Common myeloid progenitor, CD34-positive (primary cell): ENCODE measurements at regions of chr4 and their contacts with region 1.

Region 1: GRCh38 chr4:15805583-15806517 is 27.7 kb downstream of the CD38 start:
- DNase-seq: peak; percentile 64 to 83 (median 80)
- H3K4me3 ChIP-seq: no peak overlapping the region
- H3K27ac ChIP-seq: no peak overlapping the region
- H3K4me1 ChIP-seq: peaks cover 11 to 18% (median 15%) of the 10 kb centered on the region in 4 experiments
- H3K27me3 ChIP-seq: peaks cover 0 to 3% (median 0%) of the 10 kb centered on the region in 5 experiments

Region 2: DNA sequence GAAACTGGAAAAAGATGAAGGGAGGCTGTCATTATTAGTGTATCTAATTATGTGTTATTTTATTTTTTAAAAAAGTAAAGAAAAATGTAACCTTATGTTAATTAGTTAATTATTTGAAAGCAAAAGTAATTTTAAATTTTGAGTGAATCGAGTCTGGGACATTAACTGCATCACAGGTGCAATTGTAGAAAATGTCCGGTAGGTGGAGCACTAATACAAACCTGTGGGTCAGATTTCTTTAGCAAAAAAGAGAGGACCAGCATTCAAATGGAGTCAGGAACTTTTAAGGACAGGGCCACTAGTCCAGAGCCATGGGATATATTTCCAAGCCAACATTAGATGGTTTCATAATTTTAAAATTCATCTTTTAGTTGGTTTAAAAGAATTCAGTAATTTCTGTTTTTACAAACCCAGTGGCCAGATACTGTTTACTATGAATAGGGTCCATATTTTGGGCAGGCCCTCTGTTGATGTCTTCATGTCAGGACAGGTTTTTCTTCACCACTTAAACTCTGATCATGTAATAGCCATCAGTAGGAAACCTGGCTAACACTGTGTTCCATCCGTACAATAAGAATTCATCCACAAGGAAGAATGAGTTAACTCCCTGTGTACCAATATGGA is 75.8 kb before region 1 on chr4:
- CTCF ChIA-PET with region 1: interaction called, 59 read pairs
- POLR2A ChIA-PET with region 1: no interaction called
- DNase-seq: peak; percentile 48 to 60 (median 57)
- H3K4me3 ChIP-seq: no peak overlapping the region
- H3K27ac ChIP-seq: no peak overlapping the region
- H3K4me1 ChIP-seq: peaks cover 0 to 3% (median 0%) of the 10 kb centered on the region in 4 experiments
- H3K27me3 ChIP-seq: no peaks in the 10 kb centered on the region

Region 3: GRCh38 chr4:15778289-15779241 is 27.3 kb before region 1 on chr4 and contains the start of gene CD38:
- CTCF ChIA-PET with region 1: interaction called, 15 read pairs
- POLR2A ChIA-PET with region 1: no interaction called
- DNase-seq: peak; percentile 66 to 94 (median 90)
- H3K4me3 ChIP-seq: peak within 1 kb of the TSS; percentile 39 to 87 (median 79)
- H3K27ac ChIP-seq: peak within 1 kb of the TSS; percentile 28 to 69
- H3K4me1 ChIP-seq: peaks cover 15 to 53% (median 19%) of the 10 kb centered on the region in 4 experiments
- H3K27me3 ChIP-seq: peaks cover 0 to 33% (median 0%) of the 10 kb centered on the region in 5 experiments

Region 4: DNA sequence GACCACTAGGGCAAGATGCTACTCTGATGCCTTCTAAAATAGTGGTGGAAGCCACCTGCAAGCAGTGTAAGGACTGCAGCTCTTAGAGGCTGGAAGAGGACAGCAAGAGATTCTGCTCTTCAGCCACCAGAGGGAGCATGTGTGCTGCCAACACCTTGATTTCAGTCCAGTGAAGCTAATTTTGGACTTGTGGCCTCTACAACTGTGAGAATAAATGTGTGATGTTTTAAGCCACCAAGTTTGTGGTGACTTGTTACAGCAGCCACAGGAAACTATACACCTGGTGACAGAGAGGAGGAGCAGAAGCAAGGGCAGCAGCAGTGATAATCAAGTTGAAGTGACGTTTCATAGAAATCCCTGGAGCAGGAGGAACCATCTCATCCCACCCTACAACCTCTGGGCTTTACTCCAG is 76.8 kb after region 1 on chr4:
- CTCF ChIA-PET with region 1: interaction called, 88 read pairs
- POLR2A ChIA-PET with region 1: no interaction called
- DNase-seq: peak; percentile 74 to 87 (median 84)
- H3K4me3 ChIP-seq: no peak overlapping the region
- H3K27ac ChIP-seq: no peak overlapping the region
- H3K4me1 ChIP-seq: no peaks in the 10 kb centered on the region
- H3K27me3 ChIP-seq: peaks cover 0 to 2% (median 0%) of the 10 kb centered on the region in 5 experiments

Region 5: DNA sequence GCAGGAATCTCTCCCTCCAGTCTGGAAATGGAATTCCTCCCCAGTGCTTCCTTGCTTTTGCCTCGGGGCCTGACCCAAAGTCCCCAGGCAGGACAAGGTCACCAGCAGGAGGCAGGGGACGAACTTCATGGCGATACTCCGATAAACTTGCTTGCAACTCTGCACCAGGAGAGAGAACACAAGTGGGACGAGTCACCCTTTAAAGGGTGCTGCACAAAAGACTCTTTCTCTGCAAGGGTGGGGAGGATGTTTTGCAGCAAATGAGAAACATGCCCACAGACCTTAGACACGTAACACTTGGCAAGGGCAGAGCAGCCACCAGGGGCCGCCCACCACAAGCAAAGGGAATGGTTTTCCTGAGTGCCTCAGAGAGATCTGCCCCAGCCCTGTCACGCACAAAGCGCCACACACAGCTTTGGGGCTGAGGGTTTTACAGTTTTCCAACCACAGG is 157.2 kb after region 1 on chr4 and contains the start of gene FGFBP2:
- CTCF ChIA-PET with region 1: interaction called, 43 read pairs
- POLR2A ChIA-PET with region 1: no interaction called
- DNase-seq: peak; percentile 71 to 88 (median 84)
- H3K4me3 ChIP-seq: peak within 1 kb of the TSS in 2 of 7 experiments; percentile 23 to 46
- H3K27ac ChIP-seq: no peak within 1 kb of the TSS
- H3K4me1 ChIP-seq: peaks cover 5 to 15% (median 10%) of the 10 kb centered on the region in 4 experiments
- H3K27me3 ChIP-seq: no peaks in the 10 kb centered on the region